ENCODE measurements at regions of chr17 and their contacts with region 1.

Region 1: DNA sequence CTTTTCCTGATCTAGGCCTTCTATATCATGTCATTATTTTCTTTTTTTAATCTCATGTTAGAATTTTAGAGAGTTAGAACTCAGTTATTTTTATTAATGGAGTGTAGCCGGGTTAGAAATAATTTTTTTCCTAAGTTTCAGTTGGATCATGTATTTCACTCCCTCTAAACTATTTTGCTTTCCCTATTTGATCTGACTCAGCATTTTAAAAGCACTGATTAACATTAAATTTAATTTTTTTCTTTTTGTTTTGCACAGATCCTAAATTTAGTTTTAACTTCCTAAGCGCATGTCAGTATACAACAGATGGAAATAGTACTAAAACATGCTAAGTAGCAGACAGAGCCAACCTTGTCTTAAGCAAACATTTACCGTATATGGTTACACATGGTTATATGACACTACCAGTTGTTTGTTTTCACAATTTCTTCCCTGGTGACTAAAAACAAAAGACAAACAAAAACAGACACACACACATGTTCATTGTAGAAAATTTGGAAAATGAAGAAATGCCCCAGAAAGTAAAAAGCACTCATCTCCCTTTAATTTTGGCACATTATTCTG is 33.6 kb upstream of the RAB11FIP4 start:
- DNase-seq: no peak
- ATAC-seq: no peak
- H3K4me3 ChIP-seq: no peak overlapping the region
- H3K27ac ChIP-seq: no peak overlapping the region
- H3K4me1 ChIP-seq: no peaks in the 10 kb centered on the region
- H3K27me3 ChIP-seq: no peaks in the 10 kb centered on the region
- CTCF ChIP-seq: no peak
- POLR2A ChIP-seq: no peak

Region 2: DNA sequence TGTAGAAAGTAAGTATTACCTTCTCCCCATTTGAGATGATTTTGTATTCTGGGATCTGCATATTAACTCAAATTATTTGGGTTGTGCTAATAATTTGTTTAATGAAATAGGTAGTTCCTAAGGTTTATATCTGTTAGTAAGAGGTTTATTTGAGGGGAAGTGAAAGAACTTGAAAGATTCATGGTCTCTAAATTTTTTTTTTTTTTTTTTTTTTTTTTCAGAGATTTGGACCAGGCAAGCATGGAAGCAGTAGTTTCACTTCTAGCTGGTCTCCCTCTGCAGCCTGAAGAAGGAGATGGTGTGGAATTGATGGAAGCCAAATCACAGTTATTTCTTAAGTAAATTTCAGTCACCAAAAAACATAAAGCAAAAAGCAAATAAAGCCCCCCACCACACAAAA is 126.1 kb before region 1 on chr17:
- intact Hi-C with region 1: loop called in 1 of 10 experiments (anchors 10 kb)
- DNase-seq: no peak
- ATAC-seq: no peak
- H3K4me3 ChIP-seq: no peak overlapping the region
- H3K27ac ChIP-seq: no peak overlapping the region
- H3K4me1 ChIP-seq: no peaks in the 10 kb centered on the region
- H3K27me3 ChIP-seq: no peaks in the 10 kb centered on the region
- CTCF ChIP-seq: no peak
- POLR2A ChIP-seq: no peak

Region 3: GRCh38 chr17:31248986-31249834 is 108.7 kb before region 1 on chr17:
- intact Hi-C with region 1: loop called in 1 of 10 experiments (anchors 10 kb)
- DNase-seq: no peak
- ATAC-seq: no peak
- H3K4me3 ChIP-seq: no peak overlapping the region
- H3K27ac ChIP-seq: peak overlapping the region in 1 of 12 donors; percentile 25
- H3K4me1 ChIP-seq: peaks cover 0 to 21% (median 16%) of the 10 kb centered on the region in 12 donors
- H3K27me3 ChIP-seq: no peaks in the 10 kb centered on the region
- CTCF ChIP-seq: no peak
- POLR2A ChIP-seq: no peak

Region 4: GRCh38 chr17:31404028-31404954 is 46.4 kb after region 1 on chr17:
- intact Hi-C with region 1: no loop called
- DNase-seq: no peak
- ATAC-seq: no peak
- H3K4me3 ChIP-seq: no peak overlapping the region
- H3K27ac ChIP-seq: no peak overlapping the region
- H3K4me1 ChIP-seq: no peaks in the 10 kb centered on the region
- H3K27me3 ChIP-seq: peaks cover 0 to 2% (median 0%) of the 10 kb centered on the region in 9 donors
- CTCF ChIP-seq: no peak
- POLR2A ChIP-seq: no peak

Region 5: DNA sequence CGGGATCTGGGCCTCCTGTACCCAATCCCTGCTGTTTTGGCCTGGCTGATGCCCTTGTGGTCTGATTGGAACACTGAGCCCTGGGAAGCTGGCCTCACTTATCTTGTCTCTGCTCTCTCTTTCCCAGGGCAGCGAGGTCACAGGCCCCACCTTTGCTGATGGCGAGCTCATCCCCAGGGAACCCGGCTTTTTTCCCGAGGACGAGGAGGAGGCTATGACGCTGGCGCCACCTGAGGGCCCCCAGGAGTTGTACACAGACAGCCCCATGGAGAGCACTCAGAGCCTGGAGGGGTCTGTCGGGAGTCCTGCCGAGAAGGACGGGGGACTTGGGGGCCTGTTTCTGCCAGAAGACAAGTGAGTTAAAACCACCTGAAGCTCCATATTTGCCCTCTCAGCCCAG is 159.6 kb after region 1 on chr17:
- intact Hi-C with region 1: no loop called
- DNase-seq: no peak
- ATAC-seq: peak in 3 of 4 donors; percentile 46 to 63 (median 50)
- H3K4me3 ChIP-seq: no peak overlapping the region
- H3K27ac ChIP-seq: no peak overlapping the region
- H3K4me1 ChIP-seq: peaks cover 0 to 4% (median 0%) of the 10 kb centered on the region in 12 donors
- H3K27me3 ChIP-seq: no peaks in the 10 kb centered on the region
- CTCF ChIP-seq: peak in 8 of 12 donors; percentile 26 to 56 (median 36)
- POLR2A ChIP-seq: no peak

Measured in heart left ventricle (tissue), 16 donors.